Ovary (tissue), 10 donors: ENCODE measurements at regions of chr1 and their contacts with region 1.

Region 1: GRCh38 chr1:20981915-20982314 is 194.8 kb downstream of the EIF4G3 start:
- DNase-seq: no peak
- H3K4me3 ChIP-seq: no peak overlapping the region
- H3K27ac ChIP-seq: no peak overlapping the region
- H3K4me1 ChIP-seq: no peaks in the 10 kb centered on the region
- H3K27me3 ChIP-seq: no peaks in the 10 kb centered on the region
- CTCF ChIP-seq: no peak
- EP300 ChIP-seq: no peak
- POLR2A ChIP-seq: no peak

Region 2: GRCh38 chr1:20949871-20950590 is 31.9 kb before region 1 on chr1:
- intact Hi-C with region 1: loop called in 1 of 4 experiments (anchors 2 kb)
- DNase-seq: no peak
- H3K4me3 ChIP-seq: no peak overlapping the region
- H3K27ac ChIP-seq: no peak overlapping the region
- H3K4me1 ChIP-seq: no peaks in the 10 kb centered on the region
- H3K27me3 ChIP-seq: no peaks in the 10 kb centered on the region
- CTCF ChIP-seq: no peak
- EP300 ChIP-seq: no peak
- POLR2A ChIP-seq: no peak

Region 3: GRCh38 chr1:21050031-21050430 is 68.1 kb after region 1 on chr1:
- intact Hi-C with region 1: no loop called
- DNase-seq: no peak
- H3K4me3 ChIP-seq: no peak overlapping the region
- H3K27ac ChIP-seq: no peak overlapping the region
- H3K4me1 ChIP-seq: no peaks in the 10 kb centered on the region
- H3K27me3 ChIP-seq: no peaks in the 10 kb centered on the region
- CTCF ChIP-seq: no peak
- EP300 ChIP-seq: no peak
- POLR2A ChIP-seq: no peak

Region 4: DNA sequence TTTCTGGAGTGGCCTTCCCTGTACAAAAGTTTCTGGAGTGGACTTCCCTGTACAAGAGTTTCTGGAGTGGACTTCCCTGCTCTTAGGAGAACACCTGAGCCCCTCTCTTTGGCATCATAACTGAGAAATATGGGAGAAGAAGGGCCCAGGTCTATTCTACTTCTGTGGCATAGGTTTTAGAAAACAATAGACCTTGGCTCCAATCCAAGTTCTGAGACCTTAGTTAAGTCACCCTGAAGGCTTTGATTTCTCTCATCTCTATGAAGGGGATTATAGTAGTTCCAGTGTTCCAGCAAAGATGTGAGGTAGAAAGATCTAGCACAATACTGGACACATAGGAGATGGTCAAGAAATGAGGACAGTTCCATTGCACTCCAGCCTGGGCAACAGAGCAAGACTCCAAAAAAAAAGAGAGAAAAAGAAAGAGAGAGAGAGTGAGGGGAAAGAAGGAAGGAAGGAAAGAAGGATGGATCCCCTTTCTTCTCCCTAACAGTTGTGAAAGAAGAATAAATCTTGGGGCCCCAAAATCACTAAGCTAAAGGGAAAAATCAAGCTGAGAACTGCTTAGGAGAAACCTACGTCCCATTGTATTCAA is 208.1 kb after region 1 on chr1:
- intact Hi-C with region 1: loop called in 2 of 4 experiments (anchors 10 kb)
- DNase-seq: no peak
- H3K4me3 ChIP-seq: no peak overlapping the region
- H3K27ac ChIP-seq: no peak overlapping the region
- H3K4me1 ChIP-seq: no peaks in the 10 kb centered on the region
- H3K27me3 ChIP-seq: no peaks in the 10 kb centered on the region
- CTCF ChIP-seq: no peak
- EP300 ChIP-seq: no peak
- POLR2A ChIP-seq: no peak